ENCODE measurements at regions of chr6 and their contacts with region 1.

Region 1: DNA sequence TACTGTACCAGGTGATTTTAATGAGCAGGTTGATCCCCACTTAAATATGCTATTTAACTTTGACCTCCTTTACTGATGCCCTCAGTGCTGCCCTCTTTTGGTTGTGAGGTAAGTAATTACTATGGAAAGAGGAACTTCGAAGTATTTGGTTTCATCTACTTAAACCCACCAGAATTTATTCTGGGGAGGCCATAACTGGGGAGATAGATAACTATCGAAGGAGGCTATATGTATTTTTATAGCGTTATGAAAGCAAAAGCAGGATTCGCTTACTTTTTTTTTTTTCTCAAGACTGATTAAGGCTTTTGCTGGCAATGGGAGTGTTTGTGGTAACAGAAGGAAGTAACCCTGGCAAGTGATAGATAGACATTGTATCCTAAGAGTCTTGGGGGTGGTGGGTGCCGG is 168.9 kb upstream of the CENPW start:
- DNase-seq: no peak
- H3K4me3 Mint-ChIP-seq: no peak overlapping the region
- H3K27ac Mint-ChIP-seq: no peak overlapping the region
- H3K4me1 Mint-ChIP-seq: peaks cover 4% of the 10 kb centered on the region
- H3K27me3 Mint-ChIP-seq: no peaks in the 10 kb centered on the region

Region 2: GRCh38 chr6:126339796-126340609 is 169.0 kb after region 1 on chr6 and contains the start of gene CENPW:
- CTCF ChIA-PET with region 1: no interaction called
- POLR2A ChIA-PET with region 1: no interaction called
- intact Hi-C with region 1: loop called (anchors 5 kb)
- DNase-seq: peak; percentile 97
- H3K4me3 Mint-ChIP-seq: no peak within 1 kb of the TSS
- H3K27ac Mint-ChIP-seq: peak within 1 kb of the TSS; percentile 3
- H3K4me1 Mint-ChIP-seq: peaks cover 15% of the 10 kb centered on the region
- H3K27me3 Mint-ChIP-seq: no peaks in the 10 kb centered on the region
- total RNA-seq, gene CENPW: 75.1 to 84.7 TPM

Measured in activated CD4-positive, alpha-beta memory T cell treated with anti-CD3 and anti-CD28 coated beads for 36 hours (primary cell).